Dorsolateral prefrontal cortex (tissue), 120 donors: ENCODE measurements at regions of chr6 and their contacts with region 1.

Region 1: GRCh38 chr6:53906842-53907241 is 112.0 kb downstream of the LRRC1 start:
- DNase-seq: peak in 5 of 10 donors; percentile 9 to 62 (median 47)
- H3K4me3 ChIP-seq: no peak overlapping the region
- H3K27ac ChIP-seq: peak overlapping the region in 50 of 59 donors; percentile 2 to 99 (median 41)
- H3K27me3 ChIP-seq: no peaks in the 10 kb centered on the region
- CTCF ChIP-seq: no peak

Region 2: GRCh38 chr6:53794720-53795253 is 112.1 kb before region 1 on chr6 and contains the start of gene LRRC1:
- intact Hi-C with region 1: loop called (anchors 2 to 5 kb)
- DNase-seq: peak; percentile 80 to 94 (median 90)
- H3K4me3 ChIP-seq: peak within 1 kb of the TSS; percentile 57 to 99 (median 92)
- H3K27ac ChIP-seq: peak within 1 kb of the TSS; percentile 20 to 95 (median 89)
- H3K27me3 ChIP-seq: peaks cover 0 to 2% (median 0%) of the 10 kb centered on the region in 45 donors
- CTCF ChIP-seq: peak in 4 of 56 donors; percentile 0 to 28 (median 9)
- total RNA-seq, gene LRRC1: 5.4 to 73.2 (median 19.4) TPM

Region 3: GRCh38 chr6:53837865-53838769 is 68.7 kb before region 1 on chr6:
- intact Hi-C with region 1: loop called in 1 of 2 experiments (anchors 1 kb)
- DNase-seq: peak in 9 of 10 donors; percentile 38 to 84 (median 62)
- H3K4me3 ChIP-seq: peak overlapping the region in 33 of 59 donors; percentile 0 to 43 (median 21)
- H3K27ac ChIP-seq: peak overlapping the region; percentile 58 to 98 (median 91)
- H3K27me3 ChIP-seq: no peaks in the 10 kb centered on the region
- CTCF ChIP-seq: peak in 6 of 56 donors; percentile 4 to 17 (median 10)

Region 4: DNA sequence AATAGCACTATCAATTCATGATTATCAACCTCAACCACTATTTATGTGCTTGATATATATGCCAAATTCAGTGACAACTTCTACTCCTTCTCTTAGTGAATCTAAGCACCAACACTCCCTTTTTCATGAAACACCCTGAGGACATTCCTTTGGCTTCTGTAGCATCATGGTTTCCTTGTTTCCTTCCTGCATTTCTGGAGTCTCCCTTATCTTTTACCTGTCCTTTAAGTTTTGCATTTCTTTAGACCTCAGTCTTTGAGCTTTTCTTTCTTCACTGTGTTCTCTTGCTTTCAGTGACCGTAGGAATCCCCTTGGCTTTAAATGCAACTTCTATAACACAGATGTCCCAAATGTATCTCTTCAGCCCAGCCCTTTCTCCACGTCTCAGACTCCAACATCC is 60.6 kb after region 1 on chr6:
- intact Hi-C with region 1: loop called in 1 of 2 experiments (anchors 5 kb)
- DNase-seq: no peak
- H3K4me3 ChIP-seq: no peak overlapping the region
- H3K27ac ChIP-seq: no peak overlapping the region
- H3K27me3 ChIP-seq: peaks cover 0 to 53% (median 0%) of the 10 kb centered on the region in 45 donors
- CTCF ChIP-seq: no peak